ENCODE measurements at regions of chr11 and their contacts with region 1.

Region 1: DNA sequence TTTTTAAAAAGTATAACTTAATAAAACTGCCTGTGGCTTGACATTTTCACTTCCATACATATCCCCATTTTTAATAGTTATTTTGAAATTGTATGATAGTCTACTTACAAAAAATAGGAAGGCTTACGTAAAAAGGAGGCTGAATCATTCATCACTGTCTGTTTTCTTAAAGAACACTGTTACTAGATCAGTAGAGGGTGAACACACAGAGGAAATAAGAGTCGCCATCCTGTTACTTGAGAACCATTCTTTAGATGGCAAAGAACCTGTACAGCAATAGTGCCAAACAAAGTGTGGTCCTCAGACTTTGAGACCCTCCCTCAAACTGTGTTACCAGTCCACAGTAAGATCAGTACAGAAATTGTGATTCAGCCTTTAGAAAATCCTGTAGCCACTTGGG is 180.7 kb downstream of the PGR start:
- DNase-seq: peak; percentile 75
- H3K4me3 ChIP-seq: peak overlapping the region; percentile 12
- H3K27ac ChIP-seq: peak overlapping the region; percentile 94
- H3K4me1 ChIP-seq: peaks cover 46% of the 10 kb centered on the region
- H3K27me3 ChIP-seq: no peaks in the 10 kb centered on the region
- CTCF ChIP-seq: no peak

Region 2: DNA sequence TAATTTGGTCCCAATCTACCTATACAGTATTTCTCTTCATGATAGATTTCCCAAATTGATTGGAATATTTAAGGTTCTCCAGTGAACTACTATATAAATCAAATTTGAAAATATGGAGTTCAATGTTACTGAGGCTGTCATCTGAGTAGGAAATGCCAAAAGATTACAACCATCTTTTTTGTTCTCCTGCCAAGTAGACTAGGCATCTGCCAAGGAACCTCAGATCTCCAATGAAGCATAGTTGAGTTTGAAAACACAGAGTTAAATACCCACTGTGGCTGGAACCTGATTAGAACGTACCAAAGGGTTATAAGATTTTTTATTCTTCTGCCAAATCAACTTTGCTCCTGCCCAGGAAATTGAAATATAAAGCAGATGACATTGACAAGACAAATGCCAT is 1597.3 kb before region 1 on chr11:
- CTCF ChIA-PET with region 1: no interaction called
- POLR2A ChIA-PET with region 1: no interaction called
- intact Hi-C with region 1: no loop called
- DNase-seq: peak; percentile 65
- H3K4me3 ChIP-seq: no peak overlapping the region
- H3K27ac ChIP-seq: no peak overlapping the region
- H3K4me1 ChIP-seq: peaks cover 16% of the 10 kb centered on the region
- H3K27me3 ChIP-seq: no peaks in the 10 kb centered on the region
- CTCF ChIP-seq: no peak

Region 3: DNA sequence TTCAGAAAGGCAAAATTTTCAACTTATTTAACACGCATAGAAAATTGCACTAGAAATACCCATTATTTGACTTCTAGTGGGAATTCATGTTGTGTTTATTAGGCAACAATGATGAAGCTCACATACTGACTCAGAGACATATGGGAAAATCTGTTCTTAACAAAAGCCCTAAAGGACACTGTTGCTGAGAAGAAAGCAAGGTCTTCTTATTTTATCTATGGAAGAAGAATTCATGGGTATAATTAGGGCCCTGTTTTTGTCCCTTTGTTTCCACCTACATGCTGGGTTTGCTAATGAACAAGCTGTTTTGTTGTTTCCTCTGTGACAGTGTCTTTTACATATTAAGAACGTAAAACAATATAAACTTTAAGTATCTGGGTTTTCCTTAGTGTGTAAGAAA is 868.6 kb before region 1 on chr11:
- CTCF ChIA-PET with region 1: no interaction called
- POLR2A ChIA-PET with region 1: no interaction called
- intact Hi-C with region 1: loop called (anchors 5 kb)
- DNase-seq: peak; percentile 93
- H3K4me3 ChIP-seq: no peak overlapping the region
- H3K27ac ChIP-seq: peak overlapping the region; percentile 75
- H3K4me1 ChIP-seq: peaks cover 35% of the 10 kb centered on the region
- H3K27me3 ChIP-seq: no peaks in the 10 kb centered on the region
- CTCF ChIP-seq: no peak

Region 4: GRCh38 chr11:100354736-100355135 is 594.2 kb before region 1 on chr11:
- CTCF ChIA-PET with region 1: no interaction called
- POLR2A ChIA-PET with region 1: no interaction called
- intact Hi-C with region 1: no loop called
- DNase-seq: no peak
- H3K4me3 ChIP-seq: no peak overlapping the region
- H3K27ac ChIP-seq: no peak overlapping the region
- H3K4me1 ChIP-seq: no peaks in the 10 kb centered on the region
- H3K27me3 ChIP-seq: no peaks in the 10 kb centered on the region
- CTCF ChIP-seq: no peak

Region 5: GRCh38 chr11:100808904-100809491 is 139.9 kb before region 1 on chr11:
- CTCF ChIA-PET with region 1: no interaction called
- POLR2A ChIA-PET with region 1: no interaction called
- intact Hi-C with region 1: loop called (anchors 5 kb)
- DNase-seq: peak; percentile 98
- H3K4me3 ChIP-seq: peak overlapping the region; percentile 4
- H3K27ac ChIP-seq: peak overlapping the region; percentile 89
- H3K4me1 ChIP-seq: peaks cover 23% of the 10 kb centered on the region
- H3K27me3 ChIP-seq: no peaks in the 10 kb centered on the region
- CTCF ChIP-seq: no peak